HAP-1 (cell line): ENCODE measurements at regions of chr19 and their contacts with region 1.

Region 1: GRCh38 chr19:46614114-46614722 is 10.7 kb downstream of the PTGIR start:
- DNase-seq: peak; percentile 68 to 93
- H3K4me3 ChIP-seq: no peak overlapping the region
- H3K4me1 ChIP-seq: peaks cover 3% of the 10 kb centered on the region
- H3K27me3 ChIP-seq: no peaks in the 10 kb centered on the region

Region 2: GRCh38 chr19:46661020-46661731 is 47.0 kb after region 1 on chr19 and contains the start of gene DACT3:
- in situ Hi-C with region 1: loop called (anchors 5 kb)
- DNase-seq: peak; percentile 99 to 100
- H3K4me3 ChIP-seq: peak within 1 kb of the TSS; percentile 44
- H3K4me1 ChIP-seq: peaks cover 16% of the 10 kb centered on the region
- H3K27me3 ChIP-seq: no peaks in the 10 kb centered on the region

Region 3: DNA sequence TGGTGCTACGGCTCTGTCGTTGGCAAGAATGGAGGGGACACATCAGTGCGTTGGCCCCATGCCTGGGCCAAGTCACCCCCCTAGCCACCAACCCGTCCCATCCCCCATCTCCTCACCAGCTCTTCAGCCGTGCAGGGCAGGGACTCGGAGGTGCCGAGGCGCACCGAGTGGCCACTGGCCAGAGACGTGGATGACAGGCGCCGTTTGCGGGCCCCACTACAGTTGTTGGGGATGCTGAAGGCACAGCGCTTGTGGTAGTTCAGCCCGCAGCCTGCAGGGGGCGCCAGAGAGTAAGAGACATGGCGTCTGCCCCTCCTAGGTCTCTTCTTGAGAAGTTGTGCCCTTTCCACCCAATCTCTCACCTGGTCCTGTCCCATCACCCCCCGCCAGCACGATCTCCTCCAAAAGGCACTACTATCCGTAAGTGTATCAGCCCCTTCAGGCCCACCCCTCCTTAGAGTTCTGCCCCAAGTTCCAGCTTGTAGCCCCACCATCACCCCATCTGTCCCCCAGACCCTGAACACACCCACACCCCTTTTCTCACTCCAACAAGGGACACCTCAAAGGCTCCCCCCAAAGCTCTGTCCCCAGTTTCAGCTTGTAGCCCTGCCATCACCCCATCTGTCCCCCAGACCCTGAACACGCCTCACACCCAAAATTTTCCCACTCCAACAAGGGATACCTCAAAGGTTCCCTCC is 90.3 kb after region 1 on chr19:
- in situ Hi-C with region 1: no loop called
- DNase-seq: peak; percentile 36 to 91
- H3K4me3 ChIP-seq: no peak overlapping the region
- H3K4me1 ChIP-seq: no peaks in the 10 kb centered on the region
- H3K27me3 ChIP-seq: no peaks in the 10 kb centered on the region

Region 4: GRCh38 chr19:47013041-47013517 is 398.9 kb after region 1 on chr19:
- in situ Hi-C with region 1: no loop called
- DNase-seq: peak; percentile 84 to 91
- H3K4me3 ChIP-seq: no peak overlapping the region
- H3K4me1 ChIP-seq: no peaks in the 10 kb centered on the region
- H3K27me3 ChIP-seq: no peaks in the 10 kb centered on the region